ENCODE measurements at regions of chr9 and their contacts with region 1.

Region 1: DNA sequence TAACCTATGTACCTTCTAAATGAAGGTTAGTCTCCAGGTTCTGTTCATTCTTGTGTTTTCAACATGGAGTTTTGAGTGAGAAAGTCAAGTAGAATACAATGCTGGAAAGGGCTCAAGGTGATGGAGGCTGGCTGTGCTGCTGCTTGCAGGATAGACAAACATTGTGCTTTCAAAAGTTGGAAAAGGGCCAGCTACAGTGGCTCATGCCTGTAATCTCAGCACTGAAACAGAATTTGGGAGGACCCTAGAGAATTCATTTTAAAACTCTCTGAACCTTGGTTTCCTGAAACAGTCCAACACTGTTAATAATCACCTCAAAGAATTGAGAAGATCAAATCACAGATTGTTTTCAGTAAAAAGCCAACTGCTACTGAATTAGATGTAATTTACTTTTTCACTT is 15.4 kb upstream of the IARS1 start:
- DNase-seq: no peak
- ATAC-seq: no peak
- H3K4me3 ChIP-seq: no peak overlapping the region
- H3K27ac ChIP-seq: no peak overlapping the region
- H3K4me1 ChIP-seq: peaks cover 2 to 3% of the 10 kb centered on the region in 2 donors
- H3K27me3 ChIP-seq: no peaks in the 10 kb centered on the region

Region 2: DNA sequence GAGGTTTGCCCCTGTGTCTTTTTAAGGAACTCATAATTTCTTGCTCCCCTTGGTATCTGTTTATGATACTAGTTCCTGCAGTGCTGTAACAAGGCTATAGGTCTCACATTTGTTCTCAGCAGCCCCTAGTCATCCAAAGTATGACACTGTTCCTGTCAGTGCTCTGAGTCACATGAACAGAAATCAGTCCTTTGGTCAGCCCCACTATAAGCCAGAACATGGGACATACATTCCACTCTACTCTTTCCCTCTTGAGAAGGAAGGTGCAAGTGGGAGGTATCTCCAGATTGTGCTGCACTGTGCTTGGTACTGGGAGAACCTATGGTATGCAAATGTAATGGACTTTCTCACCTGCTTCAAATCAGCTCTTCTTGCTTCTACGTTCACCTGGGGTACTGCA is 102.4 kb before region 1 on chr9:
- intact Hi-C with region 1: no loop called
- DNase-seq: no peak
- ATAC-seq: no peak
- H3K4me3 ChIP-seq: no peak overlapping the region
- H3K27ac ChIP-seq: no peak overlapping the region
- H3K4me1 ChIP-seq: no peaks in the 10 kb centered on the region
- H3K27me3 ChIP-seq: no peaks in the 10 kb centered on the region

Region 3: GRCh38 chr9:92242260-92243136 is 66.4 kb before region 1 on chr9:
- intact Hi-C with region 1: loop called in 1 of 2 experiments (anchors 10 kb)
- DNase-seq: no peak
- ATAC-seq: no peak
- H3K4me3 ChIP-seq: no peak overlapping the region
- H3K27ac ChIP-seq: no peak overlapping the region
- H3K4me1 ChIP-seq: no peaks in the 10 kb centered on the region
- H3K27me3 ChIP-seq: no peaks in the 10 kb centered on the region

Region 4: GRCh38 chr9:92481040-92481633 is 172.2 kb after region 1 on chr9:
- intact Hi-C with region 1: no loop called
- DNase-seq: no peak
- ATAC-seq: no peak
- H3K4me3 ChIP-seq: peak overlapping the region; percentile 31 to 54
- H3K27ac ChIP-seq: peak overlapping the region; percentile 28 to 82
- H3K4me1 ChIP-seq: peaks cover 3 to 7% of the 10 kb centered on the region in 2 donors
- H3K27me3 ChIP-seq: no peaks in the 10 kb centered on the region

Measured in aorta (tissue), 5 donors.